Sigmoid colon (tissue), 7 donors: ENCODE measurements at regions of chr7 and their contacts with region 1.

Region 1: GRCh38 chr7:90244909-90245851 is at the start of gene CFAP69:
- DNase-seq: peak; percentile 95
- H3K4me3 ChIP-seq: peak within 1 kb of the TSS; percentile 52 to 89 (median 86)
- H3K27ac ChIP-seq: peak within 1 kb of the TSS; percentile 33 to 79 (median 50)
- H3K4me1 ChIP-seq: peaks cover 0 to 24% (median 16%) of the 10 kb centered on the region in 4 donors
- H3K27me3 ChIP-seq: no peaks in the 10 kb centered on the region
- CTCF ChIP-seq: peak in 3 of 4 experiments; percentile 17 to 62 (median 46)
- EP300 ChIP-seq: no peak
- POLR2A ChIP-seq: no peak
- total RNA-seq, gene CFAP69: 4.9 to 23.5 (median 7.0) TPM

Region 2: GRCh38 chr7:90211391-90212148 is 33.6 kb before region 1 on chr7 and contains the start of gene STEAP2:
- intact Hi-C with region 1: loop called (anchors 2 kb)
- DNase-seq: peak; percentile 98
- H3K4me3 ChIP-seq: peak within 1 kb of the TSS; percentile 70 to 76 (median 73)
- H3K27ac ChIP-seq: peak within 1 kb of the TSS; percentile 80 to 89 (median 88)
- H3K4me1 ChIP-seq: peaks cover 0 to 16% (median 7%) of the 10 kb centered on the region in 4 donors
- H3K27me3 ChIP-seq: no peaks in the 10 kb centered on the region
- CTCF ChIP-seq: peak; percentile 67 to 77 (median 72)
- EP300 ChIP-seq: no peak
- POLR2A ChIP-seq: peak; percentile 15 to 69
- total RNA-seq, gene STEAP2: 22.5 to 32.1 (median 27.6) TPM

Region 3: DNA sequence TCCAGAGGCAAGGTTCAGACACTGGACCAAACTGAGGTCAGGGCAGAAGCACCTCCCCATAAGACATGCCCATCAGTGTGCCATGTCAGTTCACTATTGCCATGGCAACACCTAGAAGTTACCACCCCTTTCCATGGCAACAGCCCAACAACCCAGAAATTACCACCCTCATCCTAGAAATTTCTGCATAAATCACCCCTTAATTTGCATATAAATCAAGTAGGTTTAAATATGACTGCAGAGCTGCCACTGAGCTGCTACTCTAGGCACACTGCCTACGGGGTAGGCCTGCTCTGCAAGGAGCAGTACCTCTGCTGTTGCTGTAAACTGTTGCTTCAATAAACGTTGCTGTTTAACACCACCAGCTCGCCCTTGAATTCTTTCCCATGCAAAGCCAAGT is 21.0 kb before region 1 on chr7:
- intact Hi-C with region 1: no loop called
- DNase-seq: no peak
- H3K4me3 ChIP-seq: no peak overlapping the region
- H3K27ac ChIP-seq: peak overlapping the region in 2 of 4 donors; percentile 52 to 60
- H3K4me1 ChIP-seq: no peaks in the 10 kb centered on the region
- H3K27me3 ChIP-seq: no peaks in the 10 kb centered on the region
- CTCF ChIP-seq: no peak
- EP300 ChIP-seq: no peak
- POLR2A ChIP-seq: no peak